HepG2 (cell line): ENCODE measurements at regions of chr18 and their contacts with region 1.

Region 1: GRCh38 chr18:22563098-22563707 is 145.5 kb upstream of the CTAGE1 start:
- DNase-seq: peak; percentile 62
- ATAC-seq: peak; percentile 79
- H3K4me3 ChIP-seq: no peak overlapping the region
- H3K27ac ChIP-seq: no peak overlapping the region
- H3K4me1 ChIP-seq: peaks cover 17% of the 10 kb centered on the region
- H3K27me3 ChIP-seq: peaks cover 2 to 11% of the 10 kb centered on the region in 2 experiments; a peak in 4 of 5 replicates
- CTCF ChIP-seq: peak; percentile 88
- EP300 ChIP-seq: no peak
- POLR2A ChIP-seq: no peak
- RAD21 ChIP-seq: peak; percentile 73

Region 2: DNA sequence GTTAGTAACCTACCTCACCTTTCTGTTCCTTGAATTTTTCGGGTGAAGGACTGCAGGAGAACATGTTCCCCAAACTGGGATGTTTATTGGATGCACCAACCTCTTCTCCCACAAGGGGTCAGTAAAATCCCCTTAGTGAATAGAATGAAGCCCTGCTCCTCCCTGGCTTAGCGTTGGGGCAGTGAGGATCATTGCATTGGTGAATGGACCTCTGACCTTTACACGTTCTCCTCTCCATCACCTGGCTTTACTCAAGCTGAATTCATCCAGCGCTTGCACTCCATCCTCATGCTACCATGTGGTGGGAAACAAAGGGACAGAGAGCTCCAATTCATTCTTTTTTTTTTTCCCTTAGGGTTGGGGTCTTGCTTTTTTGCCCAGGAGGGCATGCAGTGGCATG is 665.4 kb before region 1 on chr18:
- CTCF ChIA-PET with region 1: interaction called, 14 read pairs
- POLR2A ChIA-PET with region 1: no interaction called
- in situ Hi-C with region 1: no loop called
- intact Hi-C with region 1: loop called (anchors 1 kb)
- DNase-seq: peak; percentile 56
- ATAC-seq: peak; percentile 85
- H3K4me3 ChIP-seq: no peak overlapping the region
- H3K27ac ChIP-seq: no peak overlapping the region
- H3K4me1 ChIP-seq: peaks cover 22% of the 10 kb centered on the region
- H3K27me3 ChIP-seq: 0 out of 5 replicates have a peak, but pooled peaks cover 0 to 1% of the 10 kb centered on the region in 2 experiments
- CTCF ChIP-seq: peak; percentile 81
- EP300 ChIP-seq: no peak
- POLR2A ChIP-seq: no peak
- RAD21 ChIP-seq: peak; percentile 45

Region 3: DNA sequence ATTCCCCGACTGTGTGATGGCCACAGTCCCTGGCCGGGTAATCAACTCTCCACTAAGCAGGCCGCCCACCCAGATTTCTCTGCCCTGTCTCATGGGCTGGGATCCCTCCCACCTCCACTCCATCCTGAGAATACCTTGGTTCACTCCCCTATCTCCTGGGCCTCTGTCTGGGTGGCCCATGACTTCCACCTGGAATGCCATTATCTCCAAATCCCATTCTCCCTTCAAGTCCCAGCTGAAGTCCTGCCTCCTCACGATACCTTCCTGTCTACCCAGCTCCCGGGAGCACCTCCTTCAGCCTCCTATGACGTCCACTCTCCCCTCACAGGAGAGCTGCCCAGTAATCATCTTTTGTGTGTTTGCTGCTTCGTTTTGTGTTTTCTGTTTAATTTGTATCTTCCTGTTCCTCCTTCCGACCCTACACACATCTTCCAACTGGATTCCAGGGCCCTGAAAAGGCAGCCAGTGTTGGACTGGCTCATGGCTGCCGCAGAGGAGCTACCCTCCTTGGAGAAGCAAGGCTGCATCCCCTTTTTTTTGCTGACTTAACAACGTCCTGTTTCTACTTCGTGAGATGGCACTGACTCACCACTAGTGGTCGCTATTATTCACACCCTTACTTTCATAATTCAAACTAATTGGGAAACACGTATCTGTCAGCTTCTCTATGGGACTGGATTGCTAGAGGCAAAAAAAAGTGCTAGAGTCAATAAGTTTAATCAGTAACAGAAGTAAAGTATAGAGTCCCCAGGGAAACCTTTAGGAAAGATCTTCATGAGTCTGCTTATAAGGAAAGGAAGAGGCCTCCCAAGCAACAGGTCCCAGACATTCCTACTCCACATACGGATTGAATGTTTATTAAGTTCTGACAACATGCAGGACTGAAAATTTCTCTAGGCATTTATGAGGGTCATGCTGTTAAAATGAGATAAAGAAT is 565.7 kb before region 1 on chr18:
- CTCF ChIA-PET with region 1: no interaction called
- POLR2A ChIA-PET with region 1: no interaction called
- in situ Hi-C with region 1: no loop called
- intact Hi-C with region 1: loop called (anchors 5 kb)
- DNase-seq: peak; percentile 48
- ATAC-seq: peak; percentile 36
- H3K4me3 ChIP-seq: peak overlapping the region in 1 of 3 experiments; percentile 15; a peak in 2 of 6 replicates
- H3K27ac ChIP-seq: no peak overlapping the region
- H3K4me1 ChIP-seq: peaks cover 52% of the 10 kb centered on the region
- H3K27me3 ChIP-seq: peaks cover 0 to 7% of the 10 kb centered on the region in 2 experiments; a peak in 1 of 5 replicates
- CTCF ChIP-seq: peak; percentile 76
- EP300 ChIP-seq: no peak
- POLR2A ChIP-seq: no peak
- RAD21 ChIP-seq: peak; percentile 27; the same call in 1 of the 2 replicates

Region 4: GRCh38 chr18:22223254-22223960 is 339.8 kb before region 1 on chr18:
- CTCF ChIA-PET with region 1: no interaction called
- POLR2A ChIA-PET with region 1: no interaction called
- in situ Hi-C with region 1: no loop called
- intact Hi-C with region 1: loop called (anchors 10 kb)
- DNase-seq: peak; percentile 36
- ATAC-seq: peak; percentile 77
- H3K4me3 ChIP-seq: peak overlapping the region in 1 of 3 experiments; percentile 19; a peak in 1 of 6 replicates
- H3K27ac ChIP-seq: no peak overlapping the region
- H3K4me1 ChIP-seq: peaks cover 17% of the 10 kb centered on the region
- H3K27me3 ChIP-seq: 0 out of 5 replicates have a peak, but pooled peaks cover 0 to 5% of the 10 kb centered on the region in 2 experiments
- CTCF ChIP-seq: no peak
- EP300 ChIP-seq: no peak
- POLR2A ChIP-seq: no peak
- RAD21 ChIP-seq: no peak

Region 5: DNA sequence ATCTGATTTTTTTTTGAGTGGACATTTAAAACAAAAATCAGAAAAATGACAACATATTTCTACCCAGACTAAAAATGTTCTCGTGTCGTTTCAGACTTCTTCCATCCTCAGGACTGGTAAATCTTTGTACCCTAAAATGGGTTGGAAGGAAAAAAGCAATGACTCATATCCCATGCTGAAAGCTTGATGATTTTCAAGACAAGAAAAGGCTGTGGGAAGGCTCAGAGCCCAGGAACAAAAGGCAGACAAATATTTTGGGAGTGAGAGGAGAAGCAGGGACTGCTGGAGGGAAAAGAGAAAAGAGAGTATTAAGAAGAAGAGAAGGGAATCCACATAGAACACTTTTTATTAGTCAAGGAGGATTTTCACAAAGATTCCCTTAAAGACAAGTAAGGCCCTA is 68.4 kb before region 1 on chr18:
- CTCF ChIA-PET with region 1: no interaction called
- POLR2A ChIA-PET with region 1: no interaction called
- in situ Hi-C with region 1: no loop called
- intact Hi-C with region 1: loop called (anchors 5 kb)
- DNase-seq: no peak
- ATAC-seq: no peak
- H3K4me3 ChIP-seq: no peak overlapping the region
- H3K27ac ChIP-seq: no peak overlapping the region
- H3K4me1 ChIP-seq: peaks cover 28% of the 10 kb centered on the region
- H3K27me3 ChIP-seq: no peaks in the 10 kb centered on the region
- CTCF ChIP-seq: no peak
- EP300 ChIP-seq: no peak
- POLR2A ChIP-seq: no peak
- RAD21 ChIP-seq: no peak

Region 6: GRCh38 chr18:22694954-22695353 is 131.8 kb after region 1 on chr18:
- CTCF ChIA-PET with region 1: no interaction called
- POLR2A ChIA-PET with region 1: no interaction called
- in situ Hi-C with region 1: no loop called
- intact Hi-C with region 1: no loop called
- DNase-seq: no peak
- ATAC-seq: no peak
- H3K4me3 ChIP-seq: no peak overlapping the region
- H3K27ac ChIP-seq: no peak overlapping the region
- H3K4me1 ChIP-seq: no peaks in the 10 kb centered on the region
- H3K27me3 ChIP-seq: 0 out of 5 replicates have a peak, but pooled peaks cover 0 to 3% of the 10 kb centered on the region in 2 experiments
- CTCF ChIP-seq: no peak
- EP300 ChIP-seq: no peak
- POLR2A ChIP-seq: no peak
- RAD21 ChIP-seq: no peak

Region 7: DNA sequence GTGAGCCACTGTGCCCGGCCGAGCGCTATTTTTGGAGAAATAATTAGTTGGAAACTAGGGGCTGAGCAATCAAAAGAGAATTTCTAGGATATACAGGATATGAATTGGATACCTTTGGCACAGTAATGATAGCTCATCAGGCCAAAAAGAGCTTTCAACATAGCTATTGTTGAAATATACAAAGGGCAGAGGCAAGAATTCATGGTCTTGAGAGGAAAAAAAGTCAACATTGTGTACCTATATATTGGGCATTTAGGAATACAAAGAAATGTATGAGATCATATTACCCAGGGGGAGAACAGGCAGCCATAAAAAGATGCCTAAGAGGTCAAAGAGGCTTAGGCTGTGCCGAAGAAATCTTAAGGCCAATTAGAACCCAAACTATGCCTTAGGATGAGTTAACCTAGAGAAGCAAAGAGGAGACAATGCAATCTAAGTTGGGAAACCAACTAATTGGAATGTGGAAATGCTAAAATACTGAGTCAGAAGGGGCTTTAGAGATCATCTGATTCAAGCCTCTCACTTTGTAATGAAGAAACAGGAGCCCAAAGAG is 468.9 kb after region 1 on chr18:
- CTCF ChIA-PET with region 1: no interaction called
- POLR2A ChIA-PET with region 1: no interaction called
- in situ Hi-C with region 1: no loop called
- intact Hi-C with region 1: no loop called
- DNase-seq: no peak
- ATAC-seq: no peak
- H3K4me3 ChIP-seq: no peak overlapping the region
- H3K27ac ChIP-seq: no peak overlapping the region
- H3K4me1 ChIP-seq: no peaks in the 10 kb centered on the region
- H3K27me3 ChIP-seq: no peaks in the 10 kb centered on the region
- CTCF ChIP-seq: no peak
- EP300 ChIP-seq: no peak
- POLR2A ChIP-seq: no peak
- RAD21 ChIP-seq: no peak